Endothelial cell of umbilical vein (primary cell): ENCODE measurements at regions of chr19 and their contacts with region 1.

Region 1: DNA sequence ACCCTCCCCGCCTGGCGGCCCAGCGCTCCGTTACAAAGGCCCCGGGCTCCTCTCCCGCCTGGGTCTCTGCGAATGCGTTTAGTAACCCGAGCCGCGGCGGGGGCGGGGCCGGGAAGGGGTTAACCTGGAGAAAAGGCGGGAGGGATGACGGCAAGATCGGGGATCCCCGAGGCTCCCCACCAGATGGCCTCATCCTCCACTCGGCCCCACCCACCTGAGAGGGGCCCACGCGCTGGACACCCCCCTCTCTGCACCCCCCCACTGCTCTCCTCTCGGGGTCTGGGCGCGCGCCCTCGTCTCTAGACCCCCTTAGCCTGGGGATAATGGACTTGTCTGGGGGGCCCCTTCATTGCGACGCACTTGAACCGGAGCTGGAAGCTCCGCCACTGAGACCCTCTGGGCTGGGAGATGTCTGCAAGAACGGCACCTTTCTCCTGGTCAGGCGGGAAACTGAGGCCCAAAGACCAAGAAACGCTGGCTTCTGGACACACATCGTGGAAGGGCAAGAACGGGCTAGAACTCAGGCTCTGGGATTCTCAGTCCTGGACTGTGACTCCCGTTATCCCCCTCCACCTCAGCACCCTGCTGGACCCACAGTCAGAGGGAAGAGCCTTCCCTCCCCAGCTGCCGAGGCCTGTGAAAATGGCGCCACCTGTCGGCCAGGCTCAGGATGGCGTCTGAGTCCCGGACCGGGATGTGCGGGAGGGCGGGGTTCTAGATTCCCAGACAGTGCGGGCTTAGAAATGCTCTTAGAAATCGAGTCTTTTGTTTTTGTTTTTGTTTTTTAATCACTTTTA is 2.9 kb upstream of the LTBP4 start:
- DNase-seq: peak; percentile 87
- H3K4me3 ChIP-seq: peak overlapping the region; percentile 1 to 22 (median 5)
- H3K27ac ChIP-seq: no peak overlapping the region
- H3K4me1 ChIP-seq: peaks cover 42% of the 10 kb centered on the region
- H3K27me3 ChIP-seq: peaks cover 4 to 6% of the 10 kb centered on the region in 2 experiments
- CTCF ChIP-seq: peak; percentile 95 to 98
- POLR2A ChIP-seq: peak; percentile 39

Region 2: DNA sequence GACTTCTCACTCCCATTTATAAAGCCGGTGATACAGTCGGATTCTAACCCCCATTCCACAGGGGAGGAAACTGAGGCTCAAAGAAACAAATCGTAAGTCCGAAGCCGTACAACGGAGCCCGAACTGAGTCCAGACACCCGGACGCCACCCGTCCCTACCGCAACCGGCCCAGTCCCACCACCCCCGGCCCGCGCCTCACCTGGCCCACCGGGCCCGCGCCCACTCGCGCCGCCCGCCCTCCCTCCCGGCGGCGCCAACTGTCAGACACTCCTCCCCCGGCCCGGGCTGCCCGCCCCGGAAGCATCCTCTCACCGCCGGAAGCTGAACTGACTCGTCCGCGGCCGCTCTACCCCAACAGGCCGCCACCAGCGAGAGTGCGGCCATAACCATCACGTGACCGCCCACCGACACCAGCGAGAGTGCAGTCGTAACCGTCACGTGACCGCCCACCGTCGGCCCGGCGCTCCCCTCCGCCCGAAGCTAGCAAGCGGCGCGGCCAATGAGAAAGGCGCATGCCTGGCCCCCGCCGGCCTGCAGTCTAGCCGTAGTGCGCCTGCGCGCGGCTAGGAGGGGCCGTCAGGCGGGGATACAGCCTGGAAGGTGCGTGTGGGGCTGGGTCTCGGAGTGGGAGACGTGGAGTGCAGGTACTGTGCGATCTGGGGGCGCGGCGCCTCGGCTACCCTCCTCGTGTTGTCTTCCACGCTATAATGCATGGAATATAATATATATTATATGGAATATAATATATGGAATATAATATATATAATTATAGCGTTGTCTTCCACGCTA is 250.0 kb before region 1 on chr19 and contains the starts of genes C19orf47 and PLD3:
- CTCF ChIA-PET with region 1: interaction called, 3 read pairs
- POLR2A ChIA-PET with region 1: interaction called, 4 read pairs
- dilution Hi-C with region 1: no loop called
- intact Hi-C with region 1: loop called (anchors 5 kb)
- DNase-seq: peak; percentile 99
- H3K4me3 ChIP-seq: peak within 1 kb of the TSS; percentile 65 to 98 (median 95)
- H3K27ac ChIP-seq: peak within 1 kb of the TSS; percentile 83
- H3K4me1 ChIP-seq: peaks cover 13% of the 10 kb centered on the region
- H3K27me3 ChIP-seq: no peaks in the 10 kb centered on the region
- CTCF ChIP-seq: no peak
- POLR2A ChIP-seq: peak; percentile 98
- total RNA-seq, gene C19orf47: 16.4 and 17.3 TPM in 2 replicates
- total RNA-seq, gene PLD3: 166 and 172 TPM in 2 replicates

Region 3: GRCh38 chr19:40444192-40445028 is 153.9 kb before region 1 on chr19 and contains the start of gene SERTAD3:
- CTCF ChIA-PET with region 1: interaction called, 6 read pairs
- POLR2A ChIA-PET with region 1: no interaction called
- dilution Hi-C with region 1: no loop called
- intact Hi-C with region 1: loop called (anchors 5 kb)
- DNase-seq: peak; percentile 97
- H3K4me3 ChIP-seq: peak within 1 kb of the TSS; percentile 52 to 98 (median 95)
- H3K27ac ChIP-seq: peak within 1 kb of the TSS; percentile 90
- H3K4me1 ChIP-seq: peaks cover 9% of the 10 kb centered on the region
- H3K27me3 ChIP-seq: no peaks in the 10 kb centered on the region
- CTCF ChIP-seq: peak in 1 of 2 donors; percentile 33
- POLR2A ChIP-seq: peak; percentile 68
- total RNA-seq, gene SERTAD3: 29.9 and 32.0 TPM in 2 replicates

Region 4: GRCh38 chr19:40523322-40524047 is 74.8 kb before region 1 on chr19:
- CTCF ChIA-PET with region 1: interaction called, 17 read pairs
- POLR2A ChIA-PET with region 1: no interaction called
- dilution Hi-C with region 1: no loop called
- intact Hi-C with region 1: no loop called
- DNase-seq: peak; percentile 49
- H3K4me3 ChIP-seq: no peak overlapping the region
- H3K27ac ChIP-seq: no peak overlapping the region
- H3K4me1 ChIP-seq: no peaks in the 10 kb centered on the region
- H3K27me3 ChIP-seq: peaks cover 2 to 7% of the 10 kb centered on the region in 2 experiments
- CTCF ChIP-seq: peak; percentile 67 to 84
- POLR2A ChIP-seq: no peak

Region 5: DNA sequence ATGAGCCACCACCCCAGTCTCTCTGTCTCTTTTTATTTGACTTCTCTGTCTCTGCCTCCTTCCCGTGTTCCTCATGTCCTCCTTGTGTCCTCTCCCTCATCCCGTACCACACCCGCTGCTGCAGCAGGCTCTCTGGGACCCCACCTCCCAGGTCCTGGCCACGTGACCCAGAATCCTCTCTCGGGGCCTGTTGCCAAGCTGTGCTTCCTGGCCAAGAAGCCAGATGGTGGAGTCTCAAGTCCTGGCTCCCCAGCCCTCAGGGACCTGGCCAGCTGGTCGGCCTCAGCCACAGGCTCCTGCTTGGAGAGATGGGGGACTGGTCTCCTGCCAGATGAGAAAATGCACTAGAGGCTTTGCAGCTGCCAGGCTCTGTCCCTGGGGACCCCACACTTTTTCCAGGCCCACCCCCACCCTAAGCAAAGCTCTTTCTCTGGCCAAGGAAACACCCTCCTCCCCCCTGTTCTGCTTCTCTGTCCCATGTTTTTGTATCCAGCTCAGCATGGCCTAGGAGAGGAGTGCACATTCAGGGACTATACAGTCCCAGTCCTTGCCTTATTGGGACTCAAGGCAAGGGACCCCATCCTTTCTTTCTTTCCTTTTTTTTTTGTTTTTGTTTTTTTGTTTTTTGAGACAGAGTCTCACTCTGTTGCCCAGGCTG is 56.0 kb before region 1 on chr19:
- CTCF ChIA-PET with region 1: interaction called, 37 read pairs
- POLR2A ChIA-PET with region 1: no interaction called
- dilution Hi-C with region 1: no loop called
- intact Hi-C with region 1: loop called (anchors 2 kb)
- DNase-seq: no peak
- H3K4me3 ChIP-seq: no peak overlapping the region
- H3K27ac ChIP-seq: no peak overlapping the region
- H3K4me1 ChIP-seq: no peaks in the 10 kb centered on the region
- H3K27me3 ChIP-seq: no peaks in the 10 kb centered on the region
- CTCF ChIP-seq: no peak
- POLR2A ChIP-seq: no peak

Region 6: DNA sequence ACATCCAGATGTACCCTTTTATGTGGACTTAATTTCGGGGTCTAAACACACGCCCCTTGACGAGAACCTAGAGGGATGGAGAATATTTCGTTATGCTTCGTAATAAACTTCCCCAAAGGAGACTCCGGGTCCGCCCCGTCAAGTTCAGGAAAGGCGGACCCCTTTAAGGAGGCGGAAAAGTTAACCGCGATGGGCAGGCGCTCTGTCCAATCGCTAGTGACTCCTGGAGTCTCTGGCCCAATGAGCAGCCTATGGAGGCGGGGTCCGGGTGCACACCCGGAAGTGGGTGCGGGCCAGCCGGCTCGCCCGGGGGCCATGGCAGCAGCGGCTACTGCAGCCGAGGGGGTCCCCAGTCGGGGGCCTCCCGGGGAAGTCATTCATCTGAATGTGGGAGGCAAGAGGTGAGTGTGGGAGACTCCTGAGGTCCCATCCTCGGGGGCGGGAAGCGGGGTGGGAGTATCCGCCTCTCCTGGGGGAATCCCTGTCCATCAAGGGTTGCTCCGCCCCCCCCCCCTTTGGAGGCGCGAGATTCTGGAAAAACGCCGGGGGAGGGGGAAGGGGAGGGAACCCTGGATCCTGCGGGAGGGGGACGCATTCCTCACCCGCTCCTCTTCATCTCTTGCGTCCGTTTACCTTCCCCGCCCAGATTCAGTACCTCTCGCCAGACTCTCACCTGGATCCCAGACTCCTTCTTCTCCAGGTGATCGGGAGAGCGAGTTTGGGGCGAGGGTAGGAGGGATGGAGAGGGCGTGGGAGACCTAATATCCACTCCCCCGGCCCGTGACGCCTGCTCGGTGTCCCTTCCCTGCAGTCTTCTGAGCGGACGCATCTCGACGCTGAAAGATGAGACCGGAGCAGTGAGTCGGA is 21.5 kb before region 1 on chr19 and contains the start of gene SHKBP1:
- CTCF ChIA-PET with region 1: interaction called, 16 read pairs
- POLR2A ChIA-PET with region 1: no interaction called
- dilution Hi-C with region 1: no loop called
- intact Hi-C with region 1: loop called (anchors 2 kb)
- DNase-seq: peak; percentile 96
- H3K4me3 ChIP-seq: peak within 1 kb of the TSS; percentile 67 to 91 (median 79)
- H3K27ac ChIP-seq: peak within 1 kb of the TSS; percentile 33
- H3K4me1 ChIP-seq: peaks cover 9% of the 10 kb centered on the region
- H3K27me3 ChIP-seq: no peaks in the 10 kb centered on the region
- CTCF ChIP-seq: no peak
- POLR2A ChIP-seq: peak; percentile 62
- total RNA-seq, gene SHKBP1: 100 and 106 TPM in 2 replicates

Region 7: DNA sequence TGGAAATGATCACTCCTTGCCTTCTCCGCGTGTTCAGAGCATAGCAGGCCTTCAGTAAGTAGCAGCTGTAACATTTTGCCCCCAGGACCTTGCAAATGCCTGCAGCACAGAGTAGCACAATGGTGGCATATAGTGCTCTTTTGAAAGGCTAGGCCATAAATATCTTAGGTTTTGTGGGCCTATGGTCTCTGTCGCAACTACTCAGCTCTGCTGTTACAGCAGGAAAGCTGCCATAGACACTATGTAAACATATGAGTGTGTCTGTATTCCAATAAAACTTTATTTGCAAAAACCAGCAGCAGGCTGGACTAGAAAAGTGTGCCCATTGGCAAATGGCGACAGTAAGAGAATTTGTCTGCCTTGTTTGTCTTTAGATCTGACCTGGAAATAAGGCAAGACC is 128.0 kb after region 1 on chr19:
- CTCF ChIA-PET with region 1: no interaction called
- POLR2A ChIA-PET with region 1: no interaction called
- dilution Hi-C with region 1: no loop called
- intact Hi-C with region 1: no loop called
- DNase-seq: no peak
- H3K4me3 ChIP-seq: no peak overlapping the region
- H3K27ac ChIP-seq: no peak overlapping the region
- H3K4me1 ChIP-seq: peaks cover 15% of the 10 kb centered on the region
- H3K27me3 ChIP-seq: no peaks in the 10 kb centered on the region
- CTCF ChIP-seq: no peak
- POLR2A ChIP-seq: no peak